Activated T-helper 2 cell treated with anti-CD3 and anti-CD28 coated beads, Interferon-gamma antibody, Interleukin-2, Interleukin-4, amounts not matched to agents 10 μg/mL and 5 μg/mL and 100 μg/mL, durations not matched to agents 14 hours and 24 hours and 36 hours (primary cell): ENCODE measurements at regions of chr10 and their contacts with region 1.

Region 1: DNA sequence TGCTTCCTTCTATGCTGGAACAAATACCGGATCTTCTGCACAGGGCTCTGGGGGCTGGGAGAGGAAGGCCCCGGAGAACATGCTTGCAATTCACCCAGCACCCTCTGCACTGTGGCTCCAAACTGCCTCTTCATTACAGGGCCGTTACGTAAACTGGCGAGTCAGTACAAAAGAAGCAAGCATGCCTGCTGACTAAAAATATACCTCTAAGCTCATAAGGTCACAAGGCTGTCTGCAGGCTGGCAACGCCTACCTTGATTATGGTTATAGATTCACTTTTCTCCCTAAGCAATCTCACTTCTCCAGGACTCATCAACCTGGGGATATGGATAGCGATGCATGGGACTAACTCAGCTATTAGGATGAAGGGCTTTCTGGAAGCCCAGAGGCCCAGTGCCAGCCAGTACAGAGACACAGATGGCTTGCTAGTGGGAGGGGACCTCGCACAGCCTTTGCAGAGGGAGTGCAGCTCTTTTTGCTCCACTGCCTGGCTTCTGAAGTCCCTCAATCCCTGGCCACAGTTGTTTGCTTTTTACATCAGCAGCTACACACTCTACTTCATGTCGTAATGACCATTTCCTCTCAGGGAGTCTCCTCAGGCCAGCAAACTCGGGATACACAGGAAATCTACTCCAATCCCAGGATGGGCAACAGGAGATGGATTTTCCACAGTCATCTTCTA is 96.1 kb downstream of the SH3PXD2A start:
- DNase-seq: peak; percentile 37
- H3K4me3 Mint-ChIP-seq: peak overlapping the region; percentile 27
- H3K27ac Mint-ChIP-seq: peak overlapping the region; percentile 78
- H3K4me1 Mint-ChIP-seq: peaks cover 56% of the 10 kb centered on the region
- H3K27me3 Mint-ChIP-seq: peaks cover 14% of the 10 kb centered on the region

Region 2: DNA sequence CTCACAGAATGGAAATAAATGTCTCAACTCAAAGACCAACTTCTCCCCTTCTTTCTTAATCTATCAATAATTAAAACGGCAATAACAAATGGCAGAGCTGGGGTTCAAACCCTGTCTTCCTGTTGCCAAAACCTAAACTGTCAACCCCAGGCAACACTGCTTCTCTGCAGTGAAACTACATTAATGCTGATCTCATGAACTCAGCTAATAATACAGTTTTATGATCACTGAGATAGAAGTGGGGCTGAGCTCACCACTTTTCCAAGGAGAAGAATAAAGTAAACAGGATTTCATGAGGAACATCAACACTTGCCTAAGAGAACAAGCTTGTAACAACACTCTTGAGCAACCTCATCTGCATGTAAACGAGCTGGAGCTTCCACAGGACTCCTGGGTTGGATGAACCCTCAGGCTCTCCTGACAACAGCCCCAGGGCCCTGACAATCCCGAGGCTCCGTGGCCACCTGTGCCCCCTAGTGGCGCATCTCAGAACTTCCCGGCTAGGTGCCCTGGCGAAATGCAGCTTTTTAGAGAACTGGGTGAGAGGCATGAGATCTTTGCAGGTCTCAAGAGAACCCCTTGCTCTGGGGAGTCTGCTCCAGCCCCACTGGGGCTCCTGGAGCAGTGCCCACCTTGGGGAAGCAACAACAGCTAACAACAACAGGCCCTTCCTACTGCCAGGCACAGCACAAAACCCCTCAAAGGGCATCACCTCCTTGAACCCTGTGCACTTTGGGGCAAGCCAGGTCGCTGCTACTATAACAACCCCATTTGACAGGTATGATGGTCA is 73.2 kb before region 1 on chr10:
- intact Hi-C with region 1: no loop called
- DNase-seq: peak; percentile 65
- H3K4me3 Mint-ChIP-seq: no peak overlapping the region
- H3K27ac Mint-ChIP-seq: no peak overlapping the region
- H3K4me1 Mint-ChIP-seq: peaks cover 3% of the 10 kb centered on the region
- H3K27me3 Mint-ChIP-seq: no peaks in the 10 kb centered on the region

Region 3: GRCh38 chr10:103748020-103748419 is 11.2 kb before region 1 on chr10:
- intact Hi-C with region 1: loop called (anchors 1 kb)
- DNase-seq: peak; percentile 46
- H3K4me3 Mint-ChIP-seq: peak overlapping the region; percentile 5
- H3K27ac Mint-ChIP-seq: peak overlapping the region; percentile 83
- H3K4me1 Mint-ChIP-seq: peaks cover 40% of the 10 kb centered on the region
- H3K27me3 Mint-ChIP-seq: no peaks in the 10 kb centered on the region

Region 4: DNA sequence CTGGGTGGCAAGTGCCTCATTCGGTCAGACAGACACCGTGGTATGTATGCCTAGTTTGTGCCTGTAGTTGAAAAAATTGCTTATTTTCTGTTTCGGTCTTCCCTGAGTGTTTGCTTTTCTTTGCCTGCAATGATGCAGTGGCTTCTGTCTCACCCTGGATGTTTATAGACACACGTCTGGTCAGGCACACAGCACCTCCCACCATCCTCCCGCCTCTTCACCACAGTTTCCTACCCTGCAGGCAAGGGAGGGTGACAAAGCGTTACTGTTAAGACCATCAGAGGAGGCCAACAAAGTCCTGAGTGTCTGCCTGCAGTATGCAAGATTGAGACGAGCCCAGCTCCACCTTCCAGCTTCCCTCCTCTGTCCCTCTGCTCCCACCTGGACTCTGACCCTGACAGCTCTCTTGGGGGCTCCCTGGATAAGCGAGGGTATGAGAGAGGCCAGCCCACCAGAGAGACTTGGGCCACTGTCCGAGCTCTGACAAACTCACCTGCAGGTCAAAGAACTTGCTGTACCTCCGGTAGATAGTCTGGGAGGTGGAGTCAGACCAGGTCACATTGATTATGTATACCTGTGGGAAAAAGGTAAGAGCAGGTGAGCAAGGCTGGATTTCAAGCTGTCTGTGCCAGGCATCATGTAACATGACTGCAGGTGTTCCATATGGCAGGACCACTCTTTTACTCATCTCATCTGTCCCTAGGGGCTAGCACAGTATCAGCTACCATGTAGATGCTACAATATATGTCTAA is 41.7 kb after region 1 on chr10:
- intact Hi-C with region 1: loop called (anchors 2 kb)
- DNase-seq: peak; percentile 63
- H3K4me3 Mint-ChIP-seq: no peak overlapping the region
- H3K27ac Mint-ChIP-seq: no peak overlapping the region
- H3K4me1 Mint-ChIP-seq: peaks cover 36% of the 10 kb centered on the region
- H3K27me3 Mint-ChIP-seq: peaks cover 14% of the 10 kb centered on the region